GM12878 (cell line): ENCODE measurements at regions of chr4 and their contacts with region 1.

Region 1: DNA sequence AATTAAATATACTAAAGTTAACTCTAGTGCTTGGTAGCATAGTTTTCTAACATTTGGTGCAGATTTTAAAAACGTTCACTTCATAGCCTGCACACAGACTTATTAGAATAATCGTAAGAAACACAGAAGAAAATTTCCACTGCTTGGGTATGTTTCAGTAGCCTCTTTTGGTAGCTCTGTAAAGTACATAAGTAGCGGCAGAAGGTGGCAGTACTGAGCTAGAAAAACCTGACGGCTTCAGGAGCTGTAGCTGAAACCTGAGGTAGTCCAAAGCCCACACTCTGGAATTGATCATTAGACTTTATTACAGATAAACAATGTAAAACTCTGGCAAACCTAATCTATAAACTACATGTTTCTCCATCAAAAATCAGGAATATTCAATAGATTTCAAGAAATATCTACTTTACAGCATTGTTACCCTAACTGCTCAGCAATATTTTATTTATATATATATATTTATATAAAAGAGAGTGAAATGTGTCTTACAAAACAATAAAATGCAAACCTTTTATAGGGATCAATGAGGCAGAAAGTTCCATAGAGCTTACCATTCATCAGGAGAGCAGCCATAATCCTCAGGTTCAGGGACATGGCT is 88.2 kb downstream of the ATP8A1 start:
- DNase-seq: peak; percentile 25
- ATAC-seq: peak; percentile 96
- H3K4me3 ChIP-seq: no peak overlapping the region
- H3K27ac ChIP-seq: no peak overlapping the region
- H3K4me1 ChIP-seq: no peaks in the 10 kb centered on the region
- H3K27me3 ChIP-seq: no peaks in the 10 kb centered on the region
- CTCF ChIP-seq: peak; percentile 59 to 73 (median 65)
- EP300 ChIP-seq: no peak
- POLR2A ChIP-seq: no peak
- RAD21 ChIP-seq: peak; percentile 94

Region 2: GRCh38 chr4:42596918-42597317 is 28.2 kb after region 1 on chr4:
- CTCF ChIA-PET with region 1: interaction called, 17 read pairs
- POLR2A ChIA-PET with region 1: no interaction called
- RAD21 ChIA-PET with region 1: interaction called, 5 read pairs
- SMC1A ChIA-PET with region 1: interaction called, 6 read pairs
- in situ Hi-C with region 1: no loop called
- intact Hi-C with region 1: no loop called
- DNase-seq: peak; percentile 17
- ATAC-seq: peak; percentile 52
- H3K4me3 ChIP-seq: no peak overlapping the region
- H3K27ac ChIP-seq: no peak overlapping the region
- H3K4me1 ChIP-seq: no peaks in the 10 kb centered on the region
- H3K27me3 ChIP-seq: no peaks in the 10 kb centered on the region
- CTCF ChIP-seq: no peak
- EP300 ChIP-seq: no peak
- POLR2A ChIP-seq: no peak
- RAD21 ChIP-seq: no peak

Region 3: GRCh38 chr4:42678512-42678911 is 109.8 kb after region 1 on chr4:
- CTCF ChIA-PET with region 1: interaction called, 10 read pairs
- POLR2A ChIA-PET with region 1: no interaction called
- RAD21 ChIA-PET with region 1: interaction called, 5 read pairs
- SMC1A ChIA-PET with region 1: interaction called, 8 read pairs
- in situ Hi-C with region 1: no loop called
- intact Hi-C with region 1: no loop called
- DNase-seq: no peak
- ATAC-seq: peak; percentile 62
- H3K4me3 ChIP-seq: no peak overlapping the region
- H3K27ac ChIP-seq: no peak overlapping the region
- H3K4me1 ChIP-seq: peaks cover 6% of the 10 kb centered on the region; the same call in 1 of the 2 replicates
- H3K27me3 ChIP-seq: no peaks in the 10 kb centered on the region
- CTCF ChIP-seq: no peak
- EP300 ChIP-seq: no peak
- POLR2A ChIP-seq: no peak
- RAD21 ChIP-seq: no peak

Region 4: GRCh38 chr4:42768125-42768748 is 199.5 kb after region 1 on chr4:
- CTCF ChIA-PET with region 1: interaction called, 90 read pairs
- POLR2A ChIA-PET with region 1: interaction called, 3 read pairs
- RAD21 ChIA-PET with region 1: interaction called, 54 read pairs
- SMC1A ChIA-PET with region 1: interaction called, 54 read pairs
- in situ Hi-C with region 1: no loop called
- intact Hi-C with region 1: loop called (anchors 1 kb)
- DNase-seq: no peak
- ATAC-seq: peak; percentile 79
- H3K4me3 ChIP-seq: no peak overlapping the region
- H3K27ac ChIP-seq: no peak overlapping the region
- H3K4me1 ChIP-seq: no peaks in the 10 kb centered on the region
- H3K27me3 ChIP-seq: no peaks in the 10 kb centered on the region; a peak in 1 of 4 replicates
- CTCF ChIP-seq: peak in 2 of 3 experiments; percentile 16 to 28; a peak in 2 of 6 replicates
- EP300 ChIP-seq: no peak
- POLR2A ChIP-seq: no peak
- RAD21 ChIP-seq: 0 out of 2 replicates have a peak, but pooled peaks have one; percentile 39

Region 5: GRCh38 chr4:42865572-42866189 is 297.0 kb after region 1 on chr4:
- CTCF ChIA-PET with region 1: interaction called, 21 read pairs
- POLR2A ChIA-PET with region 1: no interaction called
- RAD21 ChIA-PET with region 1: interaction called, 21 read pairs
- SMC1A ChIA-PET with region 1: interaction called, 17 read pairs
- in situ Hi-C with region 1: loop called (anchors 5 kb)
- intact Hi-C with region 1: loop called (anchors 1 kb)
- DNase-seq: no peak
- ATAC-seq: peak; percentile 85
- H3K4me3 ChIP-seq: no peak overlapping the region
- H3K27ac ChIP-seq: no peak overlapping the region
- H3K4me1 ChIP-seq: no peaks in the 10 kb centered on the region
- H3K27me3 ChIP-seq: no peaks in the 10 kb centered on the region
- CTCF ChIP-seq: peak; percentile 65 to 72 (median 68)
- EP300 ChIP-seq: no peak
- POLR2A ChIP-seq: no peak
- RAD21 ChIP-seq: peak; percentile 89